ENCODE measurements at regions of chr6 and their contacts with region 1.

Region 1: GRCh38 chr6:43013843-43014433 is at the starts of genes KLHDC3 and MEA1:
- DNase-seq: peak; percentile 100
- ATAC-seq: peak; percentile 95
- H3K4me3 ChIP-seq: peak within 1 kb of the TSS; percentile 91 to 99
- H3K27ac ChIP-seq: peak within 1 kb of the TSS; percentile 57
- H3K4me1 ChIP-seq: peaks cover 7 to 20% of the 10 kb centered on the region in 2 experiments; a peak in 2 of 4 replicates
- H3K27me3 ChIP-seq: no peaks in the 10 kb centered on the region
- CTCF ChIP-seq: no peak
- POLR2A ChIP-seq: peak; percentile 56
- RAD21 ChIP-seq: no peak
- total RNA-seq, gene KLHDC3: 67.2 TPM
- total RNA-seq, gene MEA1: 64.8 TPM

Region 2: GRCh38 chr6:42352856-42353564 is 660.9 kb before region 1 on chr6:
- CTCF ChIA-PET with region 1: no interaction called
- POLR2A ChIA-PET with region 1: no interaction called
- RAD21 ChIA-PET with region 1: no interaction called
- intact Hi-C with region 1: no loop called
- DNase-seq: peak; percentile 31
- ATAC-seq: peak; percentile 69
- H3K4me3 ChIP-seq: no peak overlapping the region
- H3K27ac ChIP-seq: no peak overlapping the region
- H3K4me1 ChIP-seq: peaks cover 8 to 25% of the 10 kb centered on the region in 2 experiments
- H3K27me3 ChIP-seq: no peaks in the 10 kb centered on the region
- CTCF ChIP-seq: no peak
- POLR2A ChIP-seq: no peak
- RAD21 ChIP-seq: no peak

Region 3: DNA sequence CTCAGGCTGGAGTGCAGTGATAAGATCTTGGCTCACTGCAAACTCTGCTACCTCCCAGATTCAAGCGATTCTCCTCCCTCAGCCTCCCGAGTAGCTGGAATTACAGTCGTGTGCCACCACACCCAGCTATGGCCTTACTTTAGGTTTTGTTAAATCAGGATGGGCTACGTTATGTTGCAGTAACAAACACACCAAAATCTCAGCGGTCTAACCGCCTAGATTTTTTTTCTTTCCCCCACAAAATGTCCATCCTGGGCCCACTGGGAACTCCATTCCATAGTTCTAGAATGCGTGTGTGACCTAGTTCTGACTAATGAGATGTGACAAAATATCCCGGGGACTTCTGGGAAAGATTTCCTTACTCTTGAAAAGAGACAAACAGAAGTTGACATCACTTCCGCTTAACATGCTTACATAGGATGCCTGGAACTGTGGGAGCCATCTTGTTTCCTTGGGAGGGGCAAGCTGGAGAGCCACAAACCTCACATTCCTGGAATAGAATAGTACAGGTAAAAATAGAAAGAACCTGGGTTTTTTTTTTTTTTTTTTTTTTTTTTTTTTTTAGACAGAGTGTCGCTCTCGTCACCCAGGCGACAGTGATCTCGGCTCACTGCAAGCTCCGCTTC is 519.9 kb before region 1 on chr6:
- CTCF ChIA-PET with region 1: no interaction called
- POLR2A ChIA-PET with region 1: no interaction called
- RAD21 ChIA-PET with region 1: no interaction called
- intact Hi-C with region 1: no loop called
- DNase-seq: no peak
- ATAC-seq: no peak
- H3K4me3 ChIP-seq: no peak overlapping the region
- H3K27ac ChIP-seq: no peak overlapping the region
- H3K4me1 ChIP-seq: no peaks in the 10 kb centered on the region
- H3K27me3 ChIP-seq: no peaks in the 10 kb centered on the region
- CTCF ChIP-seq: no peak
- POLR2A ChIP-seq: no peak
- RAD21 ChIP-seq: no peak

Region 4: DNA sequence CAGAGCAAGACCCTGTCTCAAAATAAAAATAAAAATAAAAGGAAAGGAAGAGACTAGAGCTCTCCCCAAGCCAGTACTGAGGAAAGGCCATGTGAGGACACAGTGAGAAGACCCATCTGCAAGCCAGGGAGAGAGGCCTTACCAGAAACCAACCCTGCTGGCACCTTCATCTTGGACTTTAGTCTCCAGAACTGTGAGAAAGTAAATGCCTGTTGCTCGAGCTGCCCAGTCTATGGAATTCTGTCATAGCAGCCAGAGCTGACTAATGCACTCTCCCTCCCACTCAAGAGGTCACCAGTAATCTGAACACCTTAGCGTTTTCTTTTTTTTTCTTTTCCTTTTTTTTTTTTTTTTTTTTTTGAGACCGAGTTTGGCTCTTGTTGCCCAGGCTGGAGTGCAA is 284.2 kb before region 1 on chr6:
- CTCF ChIA-PET with region 1: no interaction called
- POLR2A ChIA-PET with region 1: no interaction called
- RAD21 ChIA-PET with region 1: no interaction called
- intact Hi-C with region 1: no loop called
- DNase-seq: no peak
- ATAC-seq: no peak
- H3K4me3 ChIP-seq: no peak overlapping the region
- H3K27ac ChIP-seq: no peak overlapping the region
- H3K4me1 ChIP-seq: peaks cover 4 to 9% of the 10 kb centered on the region in 2 experiments; a peak in 3 of 4 replicates
- H3K27me3 ChIP-seq: no peaks in the 10 kb centered on the region
- CTCF ChIP-seq: no peak
- POLR2A ChIP-seq: no peak
- RAD21 ChIP-seq: no peak

Region 5: GRCh38 chr6:42756722-42757121 is 257.2 kb before region 1 on chr6:
- CTCF ChIA-PET with region 1: no interaction called
- POLR2A ChIA-PET with region 1: no interaction called
- RAD21 ChIA-PET with region 1: no interaction called
- intact Hi-C with region 1: loop called (anchors 5 kb)
- DNase-seq: no peak
- ATAC-seq: no peak
- H3K4me3 ChIP-seq: no peak overlapping the region
- H3K27ac ChIP-seq: no peak overlapping the region
- H3K4me1 ChIP-seq: peaks cover 3 to 5% of the 10 kb centered on the region in 2 experiments
- H3K27me3 ChIP-seq: no peaks in the 10 kb centered on the region
- CTCF ChIP-seq: no peak
- POLR2A ChIP-seq: no peak
- RAD21 ChIP-seq: no peak

Region 6: GRCh38 chr6:42928986-42929820 is 84.7 kb before region 1 on chr6 and contains the start of gene CNPY3:
- CTCF ChIA-PET with region 1: no interaction called
- POLR2A ChIA-PET with region 1: no interaction called
- RAD21 ChIA-PET with region 1: no interaction called
- intact Hi-C with region 1: loop called (anchors 1 kb)
- DNase-seq: peak; percentile 98
- ATAC-seq: peak; percentile 90
- H3K4me3 ChIP-seq: peak within 1 kb of the TSS; percentile 60 to 79
- H3K27ac ChIP-seq: peak within 1 kb of the TSS; percentile 88
- H3K4me1 ChIP-seq: peaks cover 8 to 18% of the 10 kb centered on the region in 2 experiments; a peak in 3 of 4 replicates
- H3K27me3 ChIP-seq: no peaks in the 10 kb centered on the region
- CTCF ChIP-seq: no peak
- POLR2A ChIP-seq: peak; percentile 33
- RAD21 ChIP-seq: no peak
- total RNA-seq, gene CNPY3: 49.1 TPM

Region 7: GRCh38 chr6:42984001-42984923 is 29.7 kb before region 1 on chr6 and contains the start of gene PPP2R5D:
- CTCF ChIA-PET with region 1: interaction called, 5 read pairs
- POLR2A ChIA-PET with region 1: interaction called, 14 read pairs
- RAD21 ChIA-PET with region 1: no interaction called
- intact Hi-C with region 1: no loop called
- DNase-seq: peak; percentile 97
- ATAC-seq: peak; percentile 93
- H3K4me3 ChIP-seq: peak within 1 kb of the TSS; percentile 82 to 85
- H3K27ac ChIP-seq: peak within 1 kb of the TSS; percentile 73
- H3K4me1 ChIP-seq: peaks cover 6 to 27% of the 10 kb centered on the region in 2 experiments; a peak in 3 of 4 replicates
- H3K27me3 ChIP-seq: no peaks in the 10 kb centered on the region
- CTCF ChIP-seq: no peak
- POLR2A ChIP-seq: peak; percentile 85
- RAD21 ChIP-seq: no peak
- total RNA-seq, gene PPP2R5D: 49.6 TPM

Region 8: DNA sequence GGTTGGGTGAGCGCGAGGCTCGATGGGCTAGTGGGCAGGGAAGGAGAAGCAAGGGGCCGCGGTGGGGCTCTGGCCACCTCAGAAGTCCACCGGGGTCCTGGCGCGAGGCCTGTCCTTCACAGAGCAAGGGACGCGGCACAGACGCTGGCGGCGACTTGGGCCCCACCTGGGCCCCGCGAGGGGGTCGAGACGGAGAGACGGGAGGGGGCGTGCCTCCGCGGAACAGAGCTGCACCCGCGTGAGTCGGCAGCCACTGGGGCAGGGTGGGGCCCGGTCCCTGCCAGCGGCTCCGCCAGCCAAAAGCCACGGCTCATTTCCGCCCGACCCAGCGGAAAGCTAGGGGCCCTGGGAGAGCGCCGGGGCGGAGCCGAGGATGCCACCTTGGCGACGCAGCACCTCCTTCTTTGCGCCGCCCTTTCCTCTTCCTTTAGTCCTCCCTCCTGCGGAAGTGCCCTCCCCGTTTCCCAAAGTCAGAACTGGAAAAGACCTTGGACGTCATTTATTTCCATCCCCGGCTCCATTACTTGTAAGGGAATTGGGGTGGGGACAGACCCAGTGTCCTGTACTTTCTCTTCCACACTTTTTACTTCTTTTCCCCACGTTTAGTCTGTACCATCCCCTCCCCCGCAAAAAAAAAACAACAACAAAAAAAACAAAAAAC is 39.7 kb after region 1 on chr6 and contains the start of gene CUL7:
- CTCF ChIA-PET with region 1: no interaction called
- POLR2A ChIA-PET with region 1: interaction called, 10 read pairs
- RAD21 ChIA-PET with region 1: no interaction called
- intact Hi-C with region 1: loop called (anchors 5 kb)
- DNase-seq: peak; percentile 86
- ATAC-seq: peak; percentile 96
- H3K4me3 ChIP-seq: peak within 1 kb of the TSS; percentile 97
- H3K27ac ChIP-seq: peak within 1 kb of the TSS; percentile 98
- H3K4me1 ChIP-seq: peaks cover 12 to 31% of the 10 kb centered on the region in 2 experiments; a peak in 3 of 4 replicates
- H3K27me3 ChIP-seq: no peaks in the 10 kb centered on the region
- CTCF ChIP-seq: no peak
- POLR2A ChIP-seq: peak; percentile 84
- RAD21 ChIP-seq: no peak
- total RNA-seq, gene CUL7: 34.1 TPM

Region 9: DNA sequence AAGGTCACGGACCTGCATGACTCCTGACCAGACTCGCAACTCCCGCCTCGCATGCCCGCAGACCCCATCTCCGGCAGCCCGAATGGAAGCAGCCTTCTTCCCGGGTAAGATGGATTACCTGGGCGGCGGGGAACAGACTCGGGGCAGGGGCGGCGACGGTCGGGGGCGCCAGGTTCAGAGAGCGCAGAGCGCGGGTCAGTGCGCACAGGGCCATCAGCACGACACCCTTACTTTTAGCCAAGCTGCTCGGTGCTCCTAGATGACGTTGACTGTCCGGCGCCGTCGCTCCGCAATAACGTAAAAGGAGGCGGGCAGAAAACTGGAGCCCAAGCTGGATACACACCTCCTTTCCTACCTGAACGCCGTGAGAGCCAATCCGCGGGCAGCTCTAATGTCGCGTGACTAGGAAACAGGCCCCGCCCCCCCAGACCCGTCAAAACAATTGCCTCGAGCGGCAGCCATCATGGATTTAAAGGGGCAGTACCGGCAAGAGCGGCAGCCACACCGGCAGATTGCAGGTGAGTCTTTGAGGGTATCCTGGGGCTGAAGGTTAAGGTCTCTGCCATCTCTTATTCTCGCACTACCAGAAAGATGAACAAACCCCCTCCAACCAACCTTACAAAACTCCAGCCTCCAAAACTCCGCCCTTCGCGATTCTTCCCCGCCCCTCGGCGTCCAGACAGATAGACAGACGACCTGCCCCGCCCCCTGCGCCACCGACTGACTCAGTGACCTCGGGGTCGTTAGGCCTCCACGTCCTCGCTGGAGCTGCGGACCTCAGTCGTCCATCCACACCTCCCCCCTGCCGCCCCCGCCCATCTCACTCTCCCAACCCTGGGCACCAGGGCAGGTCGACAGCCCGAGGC is 45.5 kb after region 1 on chr6 and contains the starts of genes KLC4 and MRPL2:
- CTCF ChIA-PET with region 1: no interaction called
- POLR2A ChIA-PET with region 1: interaction called, 7 read pairs
- RAD21 ChIA-PET with region 1: interaction called in 1 of 2 experiments, 3 read pairs
- intact Hi-C with region 1: loop called (anchors 5 kb)
- DNase-seq: peak; percentile 97
- ATAC-seq: peak; percentile 96
- H3K4me3 ChIP-seq: peak within 1 kb of the TSS; percentile 89
- H3K27ac ChIP-seq: peak within 1 kb of the TSS; percentile 65
- H3K4me1 ChIP-seq: peaks cover 10 to 25% of the 10 kb centered on the region in 2 experiments; a peak in 3 of 4 replicates
- H3K27me3 ChIP-seq: no peaks in the 10 kb centered on the region
- CTCF ChIP-seq: no peak
- POLR2A ChIP-seq: no peak
- RAD21 ChIP-seq: no peak
- total RNA-seq, gene KLC4: 16.2 TPM
- total RNA-seq, gene MRPL2: 123 TPM

Region 10: GRCh38 chr6:43143235-43144124 is 129.5 kb after region 1 on chr6:
- CTCF ChIA-PET with region 1: interaction called, 5 read pairs
- POLR2A ChIA-PET with region 1: interaction called, 3 read pairs
- RAD21 ChIA-PET with region 1: no interaction called
- intact Hi-C with region 1: loop called (anchors 1 kb)
- DNase-seq: peak; percentile 24
- ATAC-seq: peak; percentile 99
- H3K4me3 ChIP-seq: no peak overlapping the region
- H3K27ac ChIP-seq: no peak overlapping the region
- H3K4me1 ChIP-seq: peaks cover 3 to 9% of the 10 kb centered on the region in 2 experiments; a peak in 1 of 4 replicates
- H3K27me3 ChIP-seq: no peaks in the 10 kb centered on the region
- CTCF ChIP-seq: peak; percentile 92 to 96 (median 94)
- POLR2A ChIP-seq: no peak
- RAD21 ChIP-seq: peak; percentile 98

Measured in HCT116 (cell line).